PC-9 (cell line): ENCODE measurements at regions of chr10 and their contacts with region 1.

Region 1: GRCh38 chr10:34252111-34252510 is 563.0 kb downstream of the PARD3 start:
- DNase-seq: peak in 1 of 2 experiments; percentile 29
- H3K4me3 ChIP-seq: no peak overlapping the region
- H3K27ac ChIP-seq: no peak overlapping the region
- H3K4me1 ChIP-seq: peaks cover 11% of the 10 kb centered on the region; the same call in 1 of the 2 replicates
- H3K27me3 ChIP-seq: no peaks in the 10 kb centered on the region
- CTCF ChIP-seq: no peak

Region 2: GRCh38 chr10:33249659-33250345 is 1002.3 kb before region 1 on chr10:
- CTCF ChIA-PET with region 1: no interaction called
- POLR2A ChIA-PET with region 1: interaction called, 15 read pairs
- intact Hi-C with region 1: no loop called
- DNase-seq: no peak
- H3K4me3 ChIP-seq: no peak overlapping the region
- H3K27ac ChIP-seq: 0 out of 2 replicates have a peak overlapping the region, but pooled peaks have one; percentile 63
- H3K4me1 ChIP-seq: peaks cover 57% of the 10 kb centered on the region
- H3K27me3 ChIP-seq: no peaks in the 10 kb centered on the region
- CTCF ChIP-seq: no peak

Region 3: DNA sequence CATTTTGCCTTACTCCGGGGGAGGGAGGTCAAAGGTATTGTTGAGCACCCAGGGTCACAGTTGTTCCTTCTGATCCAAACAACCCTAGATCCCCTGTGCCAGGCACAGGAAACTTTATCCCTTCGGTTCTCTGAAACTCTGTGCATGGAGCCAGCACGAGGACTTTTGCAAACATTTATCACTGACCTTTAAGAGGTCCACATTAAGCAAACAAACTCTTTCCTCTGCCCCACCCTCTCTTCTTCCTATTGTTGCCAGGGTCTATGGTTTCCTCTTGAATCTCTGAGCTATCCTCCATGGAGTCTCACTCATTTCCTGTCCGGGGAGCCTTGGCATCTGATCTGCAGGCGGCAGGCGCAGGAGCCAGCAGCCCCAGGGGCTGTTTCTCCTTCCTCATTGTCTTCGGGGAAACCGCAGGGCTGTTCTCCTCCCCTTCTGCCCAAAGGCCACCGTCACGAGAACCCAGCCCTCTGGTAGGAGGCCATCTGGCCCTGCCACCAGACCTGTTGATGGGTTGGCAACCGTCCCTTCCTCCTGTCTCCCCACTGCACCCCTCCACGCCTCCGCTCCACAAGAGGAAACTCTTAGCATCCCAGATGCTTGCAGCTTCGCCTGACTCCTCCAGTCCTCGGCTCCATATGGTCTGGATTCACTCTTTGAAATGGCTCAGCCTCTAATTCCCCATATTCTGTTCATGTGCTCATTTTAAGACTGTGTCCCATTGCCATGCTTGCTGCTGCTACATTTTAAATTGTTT is 590.4 kb before region 1 on chr10:
- CTCF ChIA-PET with region 1: no interaction called
- POLR2A ChIA-PET with region 1: no interaction called
- intact Hi-C with region 1: no loop called
- DNase-seq: peak; percentile 73 to 90
- H3K4me3 ChIP-seq: no peak overlapping the region
- H3K27ac ChIP-seq: no peak overlapping the region
- H3K4me1 ChIP-seq: peaks cover 10% of the 10 kb centered on the region
- H3K27me3 ChIP-seq: no peaks in the 10 kb centered on the region
- CTCF ChIP-seq: no peak